ENCODE measurements at regions of chr5 and their contacts with region 1.

Region 1: GRCh38 chr5:157342822-157343402 is 77.0 kb downstream of the CYFIP2 start:
- DNase-seq: peak; percentile 56 to 71
- ATAC-seq: peak; percentile 75 to 97; a peak in 5 of 6 replicates
- H3K4me3 ChIP-seq: no peak overlapping the region
- H3K27ac ChIP-seq: no peak overlapping the region
- H3K4me1 ChIP-seq: no peaks in the 10 kb centered on the region
- CTCF ChIP-seq: peak; percentile 52
- EP300 ChIP-seq: no peak
- POLR2A ChIP-seq: no peak
- RAD21 ChIP-seq: peak; percentile 53 to 57

Region 2: GRCh38 chr5:157354800-157355199 is 11.9 kb after region 1 on chr5:
- CTCF ChIA-PET with region 1: interaction called, 43 read pairs
- POLR2A ChIA-PET with region 1: no interaction called
- DNase-seq: peak; percentile 19 to 21
- ATAC-seq: peak; percentile 56 to 86; a peak in 4 of 6 replicates
- H3K4me3 ChIP-seq: no peak overlapping the region
- H3K27ac ChIP-seq: no peak overlapping the region
- H3K4me1 ChIP-seq: no peaks in the 10 kb centered on the region
- CTCF ChIP-seq: peak; percentile 46
- EP300 ChIP-seq: no peak
- POLR2A ChIP-seq: no peak
- RAD21 ChIP-seq: peak in 1 of 2 experiments; percentile 19; a peak in 1 of 5 replicates

Region 3: GRCh38 chr5:157366741-157367674 is 24.1 kb after region 1 on chr5:
- CTCF ChIA-PET with region 1: interaction called, 11 read pairs
- POLR2A ChIA-PET with region 1: no interaction called
- DNase-seq: peak; percentile 52 to 74
- ATAC-seq: peak; percentile 76 to 93
- H3K4me3 ChIP-seq: no peak overlapping the region
- H3K27ac ChIP-seq: peak overlapping the region; percentile 1 to 64; a peak in 3 of 6 replicates
- H3K4me1 ChIP-seq: peaks cover 18% of the 10 kb centered on the region
- CTCF ChIP-seq: peak; percentile 59
- EP300 ChIP-seq: no peak
- POLR2A ChIP-seq: no peak
- RAD21 ChIP-seq: peak; percentile 87 to 96

Region 4: DNA sequence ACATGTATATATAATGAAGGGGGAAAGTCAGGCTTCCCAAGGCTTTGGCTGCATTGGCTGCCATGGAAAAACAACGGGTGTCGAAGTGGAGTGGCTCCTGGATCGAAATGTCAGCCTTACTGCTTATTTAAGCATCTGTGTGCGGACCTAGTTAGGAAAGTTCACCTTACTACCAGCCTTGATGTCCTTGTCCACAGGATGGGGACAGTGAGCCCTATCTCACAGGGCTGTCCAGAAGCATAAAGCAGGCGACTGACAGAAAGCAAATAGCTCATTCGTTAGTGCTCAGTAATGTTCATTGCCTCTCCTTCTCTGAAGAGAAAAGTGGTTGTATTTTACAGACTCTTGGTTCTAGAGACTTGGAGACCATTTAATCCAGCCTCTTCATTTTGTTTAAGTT is 35.6 kb after region 1 on chr5:
- CTCF ChIA-PET with region 1: no interaction called
- POLR2A ChIA-PET with region 1: no interaction called
- DNase-seq: peak in 1 of 2 experiments; percentile 30
- ATAC-seq: peak in 1 of 2 experiments; percentile 62; a peak in 2 of 6 replicates
- H3K4me3 ChIP-seq: no peak overlapping the region
- H3K27ac ChIP-seq: no peak overlapping the region
- H3K4me1 ChIP-seq: peaks cover 5% of the 10 kb centered on the region
- CTCF ChIP-seq: no peak
- EP300 ChIP-seq: no peak
- POLR2A ChIP-seq: no peak
- RAD21 ChIP-seq: peak; percentile 25 to 46; a peak in 3 of 5 replicates

Region 5: GRCh38 chr5:157390551-157391297 is 47.8 kb after region 1 on chr5:
- CTCF ChIA-PET with region 1: interaction called, 13 read pairs
- POLR2A ChIA-PET with region 1: no interaction called
- DNase-seq: peak; percentile 98 to 99
- ATAC-seq: peak; percentile 95 to 96
- H3K4me3 ChIP-seq: no peak overlapping the region
- H3K27ac ChIP-seq: peak overlapping the region; percentile 81 to 93
- H3K4me1 ChIP-seq: peaks cover 58% of the 10 kb centered on the region
- CTCF ChIP-seq: no peak
- EP300 ChIP-seq: peak; percentile 67 to 75; a peak in 1 of 5 replicates
- POLR2A ChIP-seq: no peak
- RAD21 ChIP-seq: peak in 1 of 2 experiments; percentile 24; a peak in 1 of 5 replicates

Measured in A549 (cell line).